ENCODE measurements at regions of chr6 and their contacts with region 1.

Region 1: DNA sequence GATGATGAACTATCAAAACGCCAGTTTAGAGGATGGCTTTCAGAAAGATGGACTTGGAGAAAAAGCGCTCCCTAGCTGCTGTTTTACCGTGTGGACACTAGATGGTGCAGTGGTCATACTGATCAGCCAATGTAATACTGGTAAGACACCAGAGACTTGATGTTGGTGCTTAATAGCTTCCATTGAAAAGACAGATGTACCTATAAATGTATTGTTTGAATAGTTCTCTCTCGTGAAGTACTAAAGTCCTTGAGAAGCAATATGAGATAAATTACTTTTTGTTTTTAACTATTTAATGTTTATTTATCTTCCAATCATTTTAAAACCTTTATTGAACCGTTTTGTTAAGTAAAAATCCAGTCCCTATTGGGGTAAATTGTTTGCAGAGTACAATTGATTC is 63.9 kb upstream of the FUCA2 start:
- DNase-seq: peak; percentile 78
- H3K4me3 ChIP-seq: no peak overlapping the region
- H3K27ac ChIP-seq: no peak overlapping the region
- H3K4me1 ChIP-seq: peaks cover 12% of the 10 kb centered on the region
- H3K27me3 ChIP-seq: no peaks in the 10 kb centered on the region
- CTCF ChIP-seq: peak; percentile 61 to 71
- POLR2A ChIP-seq: no peak

Region 2: GRCh38 chr6:142819603-142820337 is 755.7 kb before region 1 on chr6:
- CTCF ChIA-PET with region 1: no interaction called
- POLR2A ChIA-PET with region 1: no interaction called
- dilution Hi-C with region 1: no loop called
- intact Hi-C with region 1: no loop called
- DNase-seq: peak; percentile 95
- H3K4me3 ChIP-seq: peak overlapping the region; percentile 16 to 71 (median 27)
- H3K27ac ChIP-seq: peak overlapping the region; percentile 93
- H3K4me1 ChIP-seq: peaks cover 16% of the 10 kb centered on the region
- H3K27me3 ChIP-seq: no peaks in the 10 kb centered on the region
- CTCF ChIP-seq: no peak
- POLR2A ChIP-seq: no peak

Region 3: GRCh38 chr6:143501851-143502250 is 73.6 kb before region 1 on chr6:
- CTCF ChIA-PET with region 1: no interaction called
- POLR2A ChIA-PET with region 1: no interaction called
- dilution Hi-C with region 1: no loop called
- intact Hi-C with region 1: no loop called
- DNase-seq: no peak
- H3K4me3 ChIP-seq: no peak overlapping the region
- H3K27ac ChIP-seq: no peak overlapping the region
- H3K4me1 ChIP-seq: no peaks in the 10 kb centered on the region
- H3K27me3 ChIP-seq: no peaks in the 10 kb centered on the region
- CTCF ChIP-seq: no peak
- POLR2A ChIP-seq: no peak

Region 4: DNA sequence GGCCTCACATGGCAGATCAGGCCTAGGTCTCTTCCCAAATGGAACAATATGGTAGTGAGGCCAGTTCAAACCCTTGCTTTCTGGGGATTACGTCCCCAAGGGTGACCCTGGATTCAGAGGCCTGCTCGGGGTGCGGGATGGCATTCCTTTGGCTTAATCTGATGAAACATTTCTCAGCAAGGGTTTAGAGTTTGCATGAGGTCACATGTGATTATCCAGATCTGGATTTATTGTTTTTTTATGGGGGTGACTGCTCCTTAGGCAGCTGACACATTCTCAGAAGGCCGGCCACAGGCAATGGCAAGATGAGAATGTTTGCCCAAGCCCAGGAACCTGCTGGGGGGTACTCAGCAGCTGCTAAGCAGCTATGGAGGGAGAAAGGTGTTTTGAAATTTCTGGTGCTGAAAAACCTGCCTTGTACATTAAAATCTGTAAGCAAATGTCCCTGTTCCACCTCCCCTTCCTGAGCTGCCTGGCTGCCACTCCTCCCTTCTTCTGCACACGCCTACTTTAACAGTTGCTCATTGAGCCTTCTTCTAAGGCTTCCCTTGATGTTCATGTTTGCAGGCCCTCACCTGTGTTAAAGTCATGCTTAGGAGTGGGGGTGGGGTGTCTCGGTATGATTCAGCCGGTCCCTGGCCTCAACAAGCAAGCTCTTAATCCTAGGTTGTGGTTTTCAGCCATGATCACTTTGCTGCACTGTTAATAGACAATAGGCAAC is 26.1 kb before region 1 on chr6:
- CTCF ChIA-PET with region 1: no interaction called
- POLR2A ChIA-PET with region 1: no interaction called
- dilution Hi-C with region 1: no loop called
- intact Hi-C with region 1: no loop called
- DNase-seq: no peak
- H3K4me3 ChIP-seq: no peak overlapping the region
- H3K27ac ChIP-seq: no peak overlapping the region
- H3K4me1 ChIP-seq: peaks cover under 1% of the 10 kb centered on the region
- H3K27me3 ChIP-seq: no peaks in the 10 kb centered on the region
- CTCF ChIP-seq: no peak
- POLR2A ChIP-seq: no peak

Region 5: GRCh38 chr6:143677891-143678791 is 102.7 kb after region 1 on chr6 and contains the start of gene PHACTR2:
- CTCF ChIA-PET with region 1: interaction called, 16 read pairs
- POLR2A ChIA-PET with region 1: no interaction called
- dilution Hi-C with region 1: no loop called
- intact Hi-C with region 1: loop called (anchors 2 kb)
- DNase-seq: peak; percentile 82
- H3K4me3 ChIP-seq: peak within 1 kb of the TSS; percentile 32 to 89 (median 80)
- H3K27ac ChIP-seq: peak within 1 kb of the TSS; percentile 91
- H3K4me1 ChIP-seq: peaks cover 38% of the 10 kb centered on the region
- H3K27me3 ChIP-seq: no peaks in the 10 kb centered on the region
- CTCF ChIP-seq: no peak
- POLR2A ChIP-seq: peak; percentile 94
- total RNA-seq, gene PHACTR2: 160 and 178 TPM in 2 replicates

Region 6: GRCh38 chr6:143759666-143760065 is 184.2 kb after region 1 on chr6:
- CTCF ChIA-PET with region 1: interaction called, 7 read pairs
- POLR2A ChIA-PET with region 1: no interaction called
- dilution Hi-C with region 1: no loop called
- intact Hi-C with region 1: loop called (anchors 5 kb)
- DNase-seq: peak; percentile 36
- H3K4me3 ChIP-seq: no peak overlapping the region
- H3K27ac ChIP-seq: peak overlapping the region; percentile 32
- H3K4me1 ChIP-seq: peaks cover 33% of the 10 kb centered on the region
- H3K27me3 ChIP-seq: no peaks in the 10 kb centered on the region
- CTCF ChIP-seq: no peak
- POLR2A ChIP-seq: no peak

Region 7: DNA sequence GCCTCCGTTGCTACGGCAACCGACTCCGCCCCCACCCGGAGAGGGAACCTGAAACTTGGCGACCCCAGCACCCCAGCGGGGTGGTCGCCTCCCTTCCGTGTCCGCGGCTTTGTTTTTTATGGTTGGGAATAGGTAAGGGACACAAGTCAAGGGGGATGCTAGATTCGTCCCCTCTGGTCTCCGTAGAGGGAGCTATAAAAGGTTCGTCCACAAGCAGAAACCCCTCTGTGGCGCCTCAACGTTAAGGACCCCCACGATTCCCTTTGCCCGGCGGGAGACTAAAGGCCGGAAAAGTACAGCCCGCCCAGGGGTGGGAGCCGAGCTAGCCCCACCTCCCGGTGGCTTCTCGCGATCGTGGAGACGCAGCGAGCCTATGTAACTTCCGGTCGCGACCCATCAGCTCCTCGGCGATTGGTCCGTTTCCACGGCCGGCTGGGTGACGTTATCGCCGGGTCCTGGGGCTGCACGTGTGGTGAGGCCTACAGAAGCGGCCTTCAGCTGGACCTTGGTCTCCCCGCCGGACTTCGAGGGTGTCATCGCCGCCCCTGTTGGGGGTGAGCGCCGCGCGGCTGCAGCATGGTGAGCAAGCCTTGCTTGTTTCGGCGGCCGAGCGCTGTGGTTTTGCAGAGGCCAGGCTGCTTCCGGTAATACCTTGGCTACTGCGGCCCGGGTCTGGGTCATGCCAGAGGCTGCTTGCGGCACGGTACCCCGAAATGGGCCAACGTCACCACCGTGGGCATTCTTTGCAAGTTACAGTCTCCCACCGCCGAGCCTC is 267.6 kb after region 1 on chr6 and contains the start of gene LTV1:
- CTCF ChIA-PET with region 1: interaction called, 40 read pairs
- POLR2A ChIA-PET with region 1: interaction called, 3 read pairs
- dilution Hi-C with region 1: no loop called
- intact Hi-C with region 1: loop called (anchors 1 kb)
- DNase-seq: peak; percentile 97
- H3K4me3 ChIP-seq: peak within 1 kb of the TSS; percentile 46 to 82 (median 49)
- H3K27ac ChIP-seq: peak within 1 kb of the TSS; percentile 90
- H3K4me1 ChIP-seq: peaks cover 9% of the 10 kb centered on the region
- H3K27me3 ChIP-seq: no peaks in the 10 kb centered on the region
- CTCF ChIP-seq: no peak
- POLR2A ChIP-seq: peak; percentile 92
- total RNA-seq, gene LTV1: 26.6 and 26.9 TPM in 2 replicates

Region 8: GRCh38 chr6:143961886-143962873 is 386.7 kb after region 1 on chr6:
- CTCF ChIA-PET with region 1: interaction called, 42 read pairs
- POLR2A ChIA-PET with region 1: no interaction called
- dilution Hi-C with region 1: no loop called
- intact Hi-C with region 1: no loop called
- DNase-seq: peak; percentile 49
- H3K4me3 ChIP-seq: no peak overlapping the region
- H3K27ac ChIP-seq: no peak overlapping the region
- H3K4me1 ChIP-seq: no peaks in the 10 kb centered on the region
- H3K27me3 ChIP-seq: peaks cover 4 to 26% of the 10 kb centered on the region in 2 experiments
- CTCF ChIP-seq: peak; percentile 26 to 44
- POLR2A ChIP-seq: no peak

Region 9: GRCh38 chr6:144087789-144088426 is 512.5 kb after region 1 on chr6:
- CTCF ChIA-PET with region 1: interaction called, 22 read pairs
- POLR2A ChIA-PET with region 1: no interaction called
- dilution Hi-C with region 1: no loop called
- intact Hi-C with region 1: no loop called
- DNase-seq: no peak
- H3K4me3 ChIP-seq: no peak overlapping the region
- H3K27ac ChIP-seq: no peak overlapping the region
- H3K4me1 ChIP-seq: no peaks in the 10 kb centered on the region
- H3K27me3 ChIP-seq: no peaks in the 10 kb centered on the region
- CTCF ChIP-seq: no peak
- POLR2A ChIP-seq: no peak